Activated CD4-positive, alpha-beta memory T cell treated with anti-CD3 and anti-CD28 coated beads for 36 hours (primary cell): ENCODE measurements at regions of chr1 and their contacts with region 1.

Region 1: GRCh38 chr1:112619520-112620376 is at the start of gene CAPZA1:
- DNase-seq: peak; percentile 95
- H3K4me3 Mint-ChIP-seq: peak within 1 kb of the TSS; percentile 96
- H3K27ac Mint-ChIP-seq: peak within 1 kb of the TSS; percentile 100
- H3K4me1 Mint-ChIP-seq: peaks cover 29% of the 10 kb centered on the region
- H3K27me3 Mint-ChIP-seq: no peaks in the 10 kb centered on the region
- total RNA-seq, gene CAPZA1: 261 to 274 TPM

Region 2: DNA sequence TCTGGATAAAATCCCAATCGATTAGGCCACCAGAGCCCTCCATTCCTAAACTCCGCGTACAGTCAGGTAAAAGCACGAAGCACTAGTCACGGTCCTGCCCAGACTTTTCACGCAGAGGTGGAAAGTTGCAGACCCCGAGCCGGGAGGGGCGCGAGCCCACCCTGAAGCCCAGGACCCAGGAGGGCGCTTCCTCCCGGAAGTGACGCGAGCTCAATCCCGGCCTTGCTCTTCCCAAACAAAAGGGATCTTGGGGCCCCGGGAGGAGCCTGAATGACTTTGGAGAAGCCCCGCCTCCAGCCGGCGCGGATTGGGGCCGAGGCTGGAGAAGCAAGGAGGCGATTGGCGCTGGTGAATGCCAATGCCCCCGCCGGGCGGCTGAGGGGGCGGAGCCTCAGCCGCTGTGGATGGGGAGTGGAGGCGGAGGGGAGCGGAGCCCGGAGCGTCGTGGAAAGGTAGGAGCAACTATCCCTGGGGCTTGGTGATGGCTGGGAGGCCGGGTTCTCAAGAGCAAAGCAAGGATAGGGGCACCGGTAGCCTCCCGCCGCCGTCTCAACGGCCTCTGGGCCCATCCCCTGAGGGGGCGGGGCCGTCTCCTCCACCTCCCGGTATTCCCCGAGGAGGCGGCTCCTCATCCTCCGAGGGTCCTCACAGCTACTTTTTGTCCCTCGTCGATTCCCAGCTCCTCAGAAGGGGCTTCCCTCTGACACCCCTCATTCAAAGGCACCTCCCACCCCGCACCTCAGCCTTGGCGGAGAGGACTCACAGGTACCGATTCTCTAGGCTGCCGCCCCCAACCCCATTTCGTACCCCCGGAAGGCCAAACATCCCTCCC is 223.7 kb before region 1 on chr1 and contains the start of gene CTTNBP2NL:
- CTCF ChIA-PET with region 1: interaction called, 21 read pairs
- POLR2A ChIA-PET with region 1: interaction called, 7 read pairs
- intact Hi-C with region 1: loop called (anchors 1 kb)
- DNase-seq: peak; percentile 86
- H3K4me3 Mint-ChIP-seq: peak within 1 kb of the TSS; percentile 91
- H3K27ac Mint-ChIP-seq: no peak within 1 kb of the TSS
- H3K4me1 Mint-ChIP-seq: peaks cover 33% of the 10 kb centered on the region
- H3K27me3 Mint-ChIP-seq: peaks cover 14% of the 10 kb centered on the region
- total RNA-seq, gene CTTNBP2NL: 5.4 to 5.9 TPM

Region 3: DNA sequence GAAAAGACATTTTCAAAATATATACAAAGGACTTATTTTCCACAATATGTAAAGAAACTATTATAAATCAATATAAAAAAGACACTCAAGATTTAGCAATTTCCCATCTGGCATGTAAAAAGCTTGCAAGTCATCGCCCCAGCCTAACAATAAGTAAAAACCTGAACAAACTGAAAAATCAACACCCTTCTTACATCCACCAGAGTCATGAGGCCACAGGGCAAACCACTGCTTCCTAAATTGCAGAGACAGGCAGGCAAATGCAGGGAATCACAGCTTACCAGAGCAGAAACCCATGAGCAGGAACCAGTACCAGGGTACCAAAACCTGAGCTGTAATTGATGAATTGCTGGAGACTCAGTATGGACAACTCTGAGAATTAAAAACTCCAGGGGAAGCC is 127.7 kb before region 1 on chr1:
- CTCF ChIA-PET with region 1: no interaction called
- POLR2A ChIA-PET with region 1: no interaction called
- intact Hi-C with region 1: no loop called
- DNase-seq: no peak
- H3K4me3 Mint-ChIP-seq: no peak overlapping the region
- H3K27ac Mint-ChIP-seq: no peak overlapping the region
- H3K4me1 Mint-ChIP-seq: no peaks in the 10 kb centered on the region
- H3K27me3 Mint-ChIP-seq: peaks cover 12% of the 10 kb centered on the region

Region 4: GRCh38 chr1:112544751-112545150 is 75.0 kb before region 1 on chr1:
- CTCF ChIA-PET with region 1: no interaction called
- POLR2A ChIA-PET with region 1: no interaction called
- intact Hi-C with region 1: no loop called
- DNase-seq: no peak
- H3K4me3 Mint-ChIP-seq: no peak overlapping the region
- H3K27ac Mint-ChIP-seq: no peak overlapping the region
- H3K4me1 Mint-ChIP-seq: peaks cover 2% of the 10 kb centered on the region
- H3K27me3 Mint-ChIP-seq: no peaks in the 10 kb centered on the region

Region 5: GRCh38 chr1:112605633-112606327 is 14.0 kb before region 1 on chr1:
- CTCF ChIA-PET with region 1: no interaction called
- POLR2A ChIA-PET with region 1: interaction called, 3 read pairs
- intact Hi-C with region 1: loop called (anchors 1 kb)
- DNase-seq: peak; percentile 17
- H3K4me3 Mint-ChIP-seq: no peak overlapping the region
- H3K27ac Mint-ChIP-seq: peak overlapping the region; percentile 18
- H3K4me1 Mint-ChIP-seq: peaks cover 9% of the 10 kb centered on the region
- H3K27me3 Mint-ChIP-seq: no peaks in the 10 kb centered on the region

Region 6: DNA sequence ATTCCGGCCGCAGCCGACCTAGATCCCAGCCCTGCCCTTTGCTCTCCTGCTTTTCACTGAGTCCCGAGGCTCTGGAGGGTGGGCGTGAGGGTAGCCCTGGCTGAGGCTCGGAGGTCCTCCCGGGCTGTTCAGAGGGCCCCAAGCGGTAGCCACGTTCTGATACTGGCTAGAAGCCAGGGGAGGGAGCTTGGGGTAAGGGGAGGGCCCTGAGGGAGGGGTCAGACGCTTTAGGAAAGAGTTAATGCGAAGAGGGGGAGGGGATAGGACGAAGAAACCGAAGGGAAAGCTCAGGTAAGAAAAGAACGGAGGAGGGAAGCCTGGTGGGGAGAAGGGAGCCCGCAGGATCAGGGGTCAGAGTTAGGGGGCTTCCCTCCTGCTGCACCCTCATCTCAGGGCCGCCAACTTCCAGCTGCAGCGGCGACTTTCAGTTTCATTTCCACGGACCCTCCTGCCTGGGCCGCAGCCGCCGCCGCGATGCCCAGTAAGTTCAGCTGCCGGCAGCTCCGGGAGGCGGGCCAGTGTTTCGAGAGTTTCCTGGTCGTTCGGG is 54.8 kb after region 1 on chr1 and contains the start of gene MOV10:
- CTCF ChIA-PET with region 1: interaction called, 7 read pairs
- POLR2A ChIA-PET with region 1: interaction called, 24 read pairs
- intact Hi-C with region 1: loop called (anchors 1 kb)
- DNase-seq: peak; percentile 73
- H3K4me3 Mint-ChIP-seq: peak within 1 kb of the TSS; percentile 96
- H3K27ac Mint-ChIP-seq: peak within 1 kb of the TSS; percentile 94
- H3K4me1 Mint-ChIP-seq: peaks cover 46% of the 10 kb centered on the region
- H3K27me3 Mint-ChIP-seq: no peaks in the 10 kb centered on the region
- total RNA-seq, gene MOV10: 57.7 to 63.1 TPM

Region 7: DNA sequence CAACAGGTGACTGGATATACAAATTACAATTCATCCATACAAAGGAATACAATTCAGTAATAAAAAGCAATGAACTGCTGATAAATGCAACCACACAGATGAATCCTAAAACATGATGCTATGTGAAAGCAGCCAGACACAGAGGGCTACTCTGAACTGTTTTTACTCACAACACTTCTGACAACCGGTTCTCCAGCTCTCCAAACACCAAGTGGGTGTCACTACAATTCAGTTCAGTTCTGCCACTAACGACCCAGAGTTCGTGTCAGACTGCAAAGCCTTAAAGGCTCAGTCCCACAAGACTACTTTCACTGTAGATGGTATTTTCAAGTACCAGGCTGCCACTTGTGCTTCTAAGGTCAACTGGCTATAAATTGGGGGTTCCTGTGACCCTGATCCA is 216.9 kb after region 1 on chr1:
- CTCF ChIA-PET with region 1: no interaction called
- POLR2A ChIA-PET with region 1: no interaction called
- intact Hi-C with region 1: no loop called
- DNase-seq: no peak
- H3K4me3 Mint-ChIP-seq: no peak overlapping the region
- H3K27ac Mint-ChIP-seq: no peak overlapping the region
- H3K4me1 Mint-ChIP-seq: peaks cover 19% of the 10 kb centered on the region
- H3K27me3 Mint-ChIP-seq: no peaks in the 10 kb centered on the region

Region 8: DNA sequence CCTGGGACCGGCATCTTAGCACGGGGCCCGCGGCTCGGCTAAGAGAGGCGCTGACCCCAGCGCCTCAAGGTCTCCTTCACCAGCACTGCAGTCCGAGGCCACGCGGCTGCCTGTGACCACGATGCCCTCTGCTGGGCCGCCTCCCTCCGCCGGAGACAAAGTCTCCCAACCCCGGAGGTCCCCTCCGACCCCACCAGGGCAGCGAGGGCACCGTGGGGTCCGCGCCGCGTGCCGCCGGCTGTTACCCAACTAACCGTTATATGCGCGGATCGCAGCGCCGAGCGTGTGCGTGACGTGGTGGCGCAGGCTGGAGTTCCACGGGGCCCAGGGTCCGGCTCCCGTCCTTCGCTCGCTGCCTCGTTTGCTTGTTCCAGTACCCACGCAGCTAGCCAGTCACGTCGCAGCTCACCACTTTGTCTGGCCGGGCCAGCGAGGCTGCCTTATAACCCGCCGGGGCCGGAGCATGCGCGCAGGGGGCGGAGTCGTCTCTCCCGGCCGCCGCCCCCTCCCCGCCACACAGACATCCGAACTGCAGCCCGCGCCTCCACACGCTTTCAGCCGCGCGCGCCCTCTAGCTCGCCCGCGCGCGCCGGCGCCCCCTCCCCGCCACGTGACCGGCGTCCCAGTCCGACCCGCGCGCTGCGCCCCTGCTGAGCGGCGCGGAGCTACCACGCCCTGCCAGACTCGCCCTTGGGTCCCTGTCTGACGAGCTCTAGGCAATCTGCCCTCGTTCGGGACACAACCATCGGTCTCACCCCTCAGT is 336.2 kb after region 1 on chr1 and contains the start of gene SLC16A1:
- CTCF ChIA-PET with region 1: no interaction called
- POLR2A ChIA-PET with region 1: interaction called, 3 read pairs
- intact Hi-C with region 1: loop called (anchors 1 kb)
- DNase-seq: peak; percentile 92
- H3K4me3 Mint-ChIP-seq: peak within 1 kb of the TSS; percentile 98
- H3K27ac Mint-ChIP-seq: peak within 1 kb of the TSS; percentile 97
- H3K4me1 Mint-ChIP-seq: peaks cover 58% of the 10 kb centered on the region
- H3K27me3 Mint-ChIP-seq: no peaks in the 10 kb centered on the region
- total RNA-seq, gene SLC16A1: 48.7 to 53.3 TPM